ENCODE measurements at regions of chr13 and their contacts with region 1.

Region 1: DNA sequence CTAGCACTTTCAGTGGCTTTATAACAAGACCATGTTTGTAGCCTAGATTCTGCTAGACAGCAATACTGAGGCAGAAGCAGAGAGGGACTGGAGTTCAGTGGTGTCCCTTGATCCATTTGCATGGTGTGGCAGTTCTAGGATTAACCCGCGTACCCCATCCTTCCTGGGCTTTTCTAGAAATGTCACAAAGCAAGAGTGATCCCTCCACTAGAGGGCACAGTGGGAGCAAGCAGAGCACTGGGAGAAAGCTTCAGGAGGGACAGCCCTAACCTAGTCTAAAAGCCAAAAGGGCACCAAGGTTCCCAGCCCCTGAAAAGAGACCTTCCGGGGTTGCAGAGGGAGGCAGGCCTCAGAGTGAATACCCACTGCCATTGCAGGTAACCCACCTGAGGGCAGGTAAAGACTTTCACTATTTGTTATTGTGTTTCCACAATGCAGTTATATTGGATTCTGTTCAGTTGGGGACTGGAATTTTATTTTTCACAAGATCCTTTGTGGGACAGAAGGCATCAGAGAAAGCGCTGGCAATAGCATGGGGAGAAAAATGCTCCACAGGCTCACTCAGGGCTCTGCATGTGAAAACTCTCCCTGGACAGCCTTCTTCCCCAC is 170.6 kb downstream of the FLT1 start:
- DNase-seq: peak; percentile 74
- H3K4me3 ChIP-seq: peak overlapping the region in 1 of 2 experiments; percentile 43; a peak in 1 of 4 replicates
- H3K27ac ChIP-seq: no peak overlapping the region
- H3K4me1 ChIP-seq: peaks cover 10 to 11% of the 10 kb centered on the region in 2 experiments; a peak in 3 of 4 replicates
- H3K27me3 ChIP-seq: no peaks in the 10 kb centered on the region
- CTCF ChIP-seq: peak; percentile 84
- EP300 ChIP-seq: no peak
- RAD21 ChIP-seq: peak; percentile 88

Region 2: DNA sequence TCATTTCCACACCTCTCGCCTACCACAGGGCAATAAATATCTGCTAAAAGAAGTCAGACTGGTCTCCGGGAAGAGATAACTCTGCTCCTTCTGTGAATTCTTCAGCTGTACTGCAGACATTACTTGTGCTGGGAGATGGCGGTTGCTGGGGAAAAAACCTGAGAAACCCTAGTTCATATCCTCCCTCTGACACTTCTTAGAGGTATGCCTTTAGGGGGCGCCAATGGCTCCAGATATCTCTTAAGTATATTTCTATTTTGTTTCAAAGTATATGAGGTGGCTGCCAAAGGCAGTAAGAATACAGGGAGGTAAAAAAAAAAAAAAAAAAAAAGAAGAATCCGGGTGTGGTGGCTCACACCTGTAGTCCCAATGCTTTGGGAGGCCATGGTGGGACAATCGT is 10.7 kb before region 1 on chr13:
- CTCF ChIA-PET with region 1: interaction called, 16 read pairs
- POLR2A ChIA-PET with region 1: no interaction called
- DNase-seq: no peak
- H3K4me3 ChIP-seq: no peak overlapping the region
- H3K27ac ChIP-seq: no peak overlapping the region
- H3K4me1 ChIP-seq: no peaks in the 10 kb centered on the region
- H3K27me3 ChIP-seq: no peaks in the 10 kb centered on the region
- CTCF ChIP-seq: peak; percentile 37
- EP300 ChIP-seq: no peak
- RAD21 ChIP-seq: no peak

Region 3: GRCh38 chr13:28337166-28338005 is 13.1 kb after region 1 on chr13:
- CTCF ChIA-PET with region 1: interaction called, 22 read pairs
- POLR2A ChIA-PET with region 1: no interaction called
- DNase-seq: no peak
- H3K4me3 ChIP-seq: no peak overlapping the region
- H3K27ac ChIP-seq: peak overlapping the region; percentile 50 to 72; a peak in 3 of 4 replicates
- H3K4me1 ChIP-seq: peaks cover 3 to 28% of the 10 kb centered on the region in 2 experiments
- H3K27me3 ChIP-seq: no peaks in the 10 kb centered on the region
- CTCF ChIP-seq: no peak
- EP300 ChIP-seq: no peak
- RAD21 ChIP-seq: no peak